ENCODE measurements at regions of chr7 and their contacts with region 1.

Region 1: DNA sequence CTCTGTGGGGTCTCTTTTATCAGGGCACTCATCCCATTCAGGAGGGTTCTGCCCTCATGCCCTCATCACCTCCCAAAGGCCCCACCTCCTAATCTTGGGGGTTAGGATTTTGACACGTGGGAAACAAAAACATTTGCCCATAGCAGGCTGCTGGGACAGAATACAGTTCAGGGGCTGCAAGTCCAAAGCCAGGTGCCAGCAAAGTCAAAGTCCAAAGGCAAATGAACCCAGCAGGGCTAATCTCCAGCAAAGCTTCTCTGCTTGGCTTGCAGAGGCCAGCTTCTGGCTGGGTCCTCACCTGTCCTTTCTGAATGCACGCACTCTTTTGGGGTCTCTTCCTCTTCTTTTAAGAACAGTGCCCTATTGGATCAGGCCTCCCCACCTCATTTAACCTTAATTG is 359.9 kb downstream of the DPP6 start:
- DNase-seq: no peak
- H3K4me3 ChIP-seq: no peak overlapping the region
- H3K27ac ChIP-seq: no peak overlapping the region
- H3K4me1 ChIP-seq: no peaks in the 10 kb centered on the region
- H3K27me3 ChIP-seq: no peaks in the 10 kb centered on the region
- CTCF ChIP-seq: no peak
- EP300 ChIP-seq: no peak
- POLR2A ChIP-seq: no peak

Region 2: DNA sequence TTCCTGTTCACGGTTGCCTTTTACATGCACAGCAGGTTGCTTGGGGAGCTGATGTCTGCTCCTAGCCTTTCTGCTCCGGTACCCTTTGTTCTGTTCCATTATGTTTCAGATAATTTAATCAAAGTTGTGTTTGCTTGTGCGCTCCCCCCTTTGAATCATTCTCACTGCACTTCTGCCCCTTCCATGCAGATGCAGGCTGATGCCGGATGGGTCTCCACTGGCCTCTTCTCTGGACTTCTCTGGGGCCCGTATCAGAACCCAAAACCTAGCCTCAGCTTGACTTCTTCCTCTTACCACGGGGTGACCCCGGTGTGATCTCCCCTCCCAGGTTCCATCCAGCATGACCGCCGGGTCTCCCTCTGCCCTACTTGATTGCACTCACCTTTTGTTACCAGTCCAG is 87.9 kb before region 1 on chr7:
- in situ Hi-C with region 1: no loop called
- intact Hi-C with region 1: loop called (anchors 2 kb)
- DNase-seq: no peak
- H3K4me3 ChIP-seq: no peak overlapping the region
- H3K27ac ChIP-seq: no peak overlapping the region
- H3K4me1 ChIP-seq: no peaks in the 10 kb centered on the region
- H3K27me3 ChIP-seq: no peaks in the 10 kb centered on the region
- CTCF ChIP-seq: no peak
- EP300 ChIP-seq: no peak
- POLR2A ChIP-seq: no peak

Measured in transverse colon (tissue), 4 donors.